CD8-positive, alpha-beta T cell (primary cell): ENCODE measurements at regions of chr9 and their contacts with region 1.

Region 1: GRCh38 chr9:20361656-20362570 is 260.4 kb downstream of the MLLT3 start:
- DNase-seq: no peak
- ATAC-seq: peak; percentile 64
- H3K4me3 ChIP-seq: no peak overlapping the region
- H3K4me3 Mint-ChIP-seq: peak overlapping the region; percentile 23
- H3K27ac ChIP-seq: no peak overlapping the region
- H3K27ac Mint-ChIP-seq: peak overlapping the region; percentile 23
- H3K4me1 ChIP-seq: peaks cover 13% of the 10 kb centered on the region
- H3K4me1 Mint-ChIP-seq: peaks cover 46% of the 10 kb centered on the region
- H3K27me3 ChIP-seq: no peaks in the 10 kb centered on the region
- H3K27me3 Mint-ChIP-seq: no peaks in the 10 kb centered on the region
- CTCF ChIP-seq: no peak

Region 2: DNA sequence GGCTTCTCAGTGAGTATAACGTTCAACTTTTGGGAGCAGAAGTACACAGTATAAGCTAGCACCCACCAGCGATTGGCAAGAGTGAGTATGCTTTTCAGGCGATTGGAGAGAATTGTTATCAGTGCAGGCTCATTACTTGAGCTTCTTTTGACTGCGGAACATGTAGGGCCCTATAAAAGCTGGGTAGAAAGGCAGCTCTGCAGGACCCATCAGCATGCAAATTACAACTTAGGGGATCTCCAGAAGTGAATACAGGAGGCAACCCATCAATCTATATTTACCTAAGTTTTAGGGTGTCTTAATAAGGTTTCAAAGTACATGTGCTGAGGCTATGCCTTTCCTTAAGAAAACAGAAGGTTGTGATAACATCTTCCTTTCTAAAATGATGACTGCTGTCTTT is 35.4 kb after region 1 on chr9:
- CTCF ChIA-PET with region 1: no interaction called
- POLR2A ChIA-PET with region 1: interaction called, 3 read pairs
- intact Hi-C with region 1: loop called in 1 of 2 experiments (anchors 5 kb)
- DNase-seq: no peak
- ATAC-seq: no peak
- H3K4me3 ChIP-seq: no peak overlapping the region
- H3K4me3 Mint-ChIP-seq: no peak overlapping the region
- H3K27ac ChIP-seq: no peak overlapping the region
- H3K27ac Mint-ChIP-seq: no peak overlapping the region
- H3K4me1 ChIP-seq: peaks cover 45% of the 10 kb centered on the region
- H3K4me1 Mint-ChIP-seq: peaks cover 65% of the 10 kb centered on the region
- H3K27me3 ChIP-seq: no peaks in the 10 kb centered on the region
- H3K27me3 Mint-ChIP-seq: no peaks in the 10 kb centered on the region
- CTCF ChIP-seq: no peak